RWPE1 (cell line): ENCODE measurements at regions of chr7 and their contacts with region 1.

Region 1: DNA sequence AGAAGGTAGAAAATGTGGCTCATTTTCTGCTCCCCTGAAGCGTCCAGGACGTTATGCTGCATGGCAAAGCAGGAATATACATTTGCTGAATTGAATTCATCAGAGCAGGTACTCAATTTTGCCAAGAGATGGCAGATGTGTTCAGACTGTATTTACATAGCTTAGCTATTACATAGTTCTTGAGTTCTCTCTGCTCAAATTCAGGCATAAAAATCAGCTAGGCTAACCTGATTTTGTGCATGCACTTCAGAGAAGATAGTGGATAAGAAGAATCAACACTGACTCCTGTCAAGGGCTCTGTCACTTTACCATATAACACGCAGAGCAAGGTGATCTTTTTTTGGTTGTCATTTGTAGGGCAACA is 209.2 kb upstream of the FAM3C start:
- DNase-seq: peak; percentile 5
- H3K27ac ChIP-seq: no peak overlapping the region
- CTCF ChIP-seq: peak; percentile 65

Region 2: DNA sequence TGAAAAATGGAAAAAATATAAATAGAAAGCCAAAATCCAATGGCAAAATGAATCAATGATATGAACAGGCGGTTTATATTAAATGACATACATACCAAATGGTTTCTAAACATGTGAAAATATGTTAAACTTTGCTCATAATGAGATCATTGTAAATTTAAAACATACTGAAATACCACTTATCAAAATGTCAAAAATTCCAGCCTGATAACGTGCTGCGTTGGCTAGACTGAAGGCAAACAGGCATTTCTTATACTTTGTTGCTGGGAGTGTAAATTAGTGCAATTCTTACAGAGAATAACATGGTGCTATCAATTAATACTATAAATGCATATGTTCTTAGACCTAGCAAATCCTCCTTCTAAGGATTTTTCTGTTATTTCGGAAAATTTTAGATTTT is 16.6 kb after region 1 on chr7:
- CTCF ChIA-PET with region 1: no interaction called
- POLR2A ChIA-PET with region 1: no interaction called
- DNase-seq: no peak
- H3K27ac ChIP-seq: no peak overlapping the region
- CTCF ChIP-seq: no peak

Region 3: GRCh38 chr7:121994625-121995410 is 389.5 kb after region 1 on chr7:
- CTCF ChIA-PET with region 1: interaction called, 24 read pairs
- POLR2A ChIA-PET with region 1: no interaction called
- DNase-seq: peak; percentile 73
- H3K27ac ChIP-seq: no peak overlapping the region
- CTCF ChIP-seq: peak; percentile 94